ENCODE measurements at regions of chr3 and their contacts with region 1.

Region 1: GRCh38 chr3:33218446-33219174 is at the start of gene SUSD5:
- DNase-seq: peak; percentile 62 to 85
- ATAC-seq: peak; percentile 88
- H3K4me3 ChIP-seq: peak within 1 kb of the TSS; percentile 93 to 94
- H3K27ac ChIP-seq: peak within 1 kb of the TSS; percentile 77 to 97
- H3K4me1 ChIP-seq: no peaks in the 10 kb centered on the region
- H3K27me3 ChIP-seq: no peaks in the 10 kb centered on the region
- total RNA-seq, gene SUSD5: 132 to 230 TPM

Region 2: GRCh38 chr3:33089515-33089914 is 129.1 kb before region 1 on chr3:
- intact Hi-C with region 1: no loop called
- DNase-seq: no peak
- ATAC-seq: no peak
- H3K4me3 ChIP-seq: no peak overlapping the region
- H3K27ac ChIP-seq: no peak overlapping the region
- H3K4me1 ChIP-seq: peaks cover 0 to 2% of the 10 kb centered on the region in 2 donors
- H3K27me3 ChIP-seq: no peaks in the 10 kb centered on the region

Region 3: DNA sequence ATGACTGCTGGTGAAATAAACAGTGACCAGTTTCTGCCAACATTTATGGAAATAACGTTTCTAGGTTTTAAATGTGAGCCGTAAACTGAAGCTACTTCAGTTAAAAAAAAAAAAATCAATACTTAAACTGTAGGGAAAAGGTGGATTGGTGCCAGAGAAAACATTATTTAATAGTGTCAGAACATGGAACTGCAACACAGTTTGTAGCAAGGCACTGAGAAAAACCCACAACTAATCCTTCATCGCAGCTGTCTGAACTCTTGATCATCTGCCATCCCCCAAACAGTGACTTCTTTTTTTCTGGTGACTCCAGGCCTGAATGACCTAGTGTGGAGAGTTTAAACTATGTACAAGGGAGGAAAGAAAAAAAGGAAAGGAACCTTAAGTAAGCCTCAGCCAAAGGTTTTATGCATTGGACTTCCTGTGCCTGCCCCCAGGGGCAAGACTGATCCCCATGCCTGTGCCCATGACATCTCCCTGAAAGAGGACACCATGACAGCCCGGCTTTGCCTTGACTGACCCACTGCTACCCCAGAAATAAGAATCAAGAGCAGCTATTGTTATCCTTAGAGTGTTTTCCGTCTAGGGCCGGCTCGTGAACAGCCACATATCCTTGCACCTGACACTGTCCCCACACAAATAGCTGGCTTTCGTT is 71.7 kb before region 1 on chr3:
- intact Hi-C with region 1: loop called (anchors 5 kb)
- DNase-seq: no peak
- ATAC-seq: peak; percentile 69
- H3K4me3 ChIP-seq: no peak overlapping the region
- H3K27ac ChIP-seq: peak overlapping the region; percentile 52 to 86
- H3K4me1 ChIP-seq: peaks cover 4 to 12% of the 10 kb centered on the region in 2 donors
- H3K27me3 ChIP-seq: no peaks in the 10 kb centered on the region